Posterior vena cava (tissue), 2 donors: ENCODE measurements at regions of chr7 and their contacts with region 1.

Region 1: DNA sequence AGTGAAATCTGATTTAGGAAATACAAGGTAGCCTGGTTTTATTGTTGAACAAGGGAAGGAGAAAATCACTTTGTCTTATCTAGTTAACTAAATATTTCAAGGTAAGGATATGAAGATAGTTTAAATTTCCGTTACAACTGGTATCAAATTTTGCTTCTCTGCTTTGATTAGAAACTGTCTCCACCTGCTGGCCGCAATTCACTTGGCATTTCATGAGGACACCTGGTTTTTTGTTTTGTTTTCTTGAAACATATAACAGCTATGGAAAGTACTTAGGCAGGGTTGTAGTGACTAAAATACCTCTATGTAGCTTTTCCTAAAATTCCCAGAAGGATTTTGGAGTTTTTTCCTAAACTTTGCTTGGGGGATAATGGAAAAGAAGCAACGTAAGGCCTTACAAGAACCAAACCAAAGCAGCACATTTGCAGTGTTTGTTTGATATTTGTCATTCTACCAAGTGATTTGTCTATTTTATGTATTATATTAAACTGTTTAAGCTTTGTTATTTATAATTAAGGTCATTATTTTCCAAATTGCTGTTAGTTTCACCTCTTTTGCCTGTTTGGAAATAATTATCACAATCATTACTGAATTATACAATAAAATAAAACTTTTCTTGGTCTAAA is 73.6 kb downstream of the AHCYL2 start:
- DNase-seq: no peak

Region 2: DNA sequence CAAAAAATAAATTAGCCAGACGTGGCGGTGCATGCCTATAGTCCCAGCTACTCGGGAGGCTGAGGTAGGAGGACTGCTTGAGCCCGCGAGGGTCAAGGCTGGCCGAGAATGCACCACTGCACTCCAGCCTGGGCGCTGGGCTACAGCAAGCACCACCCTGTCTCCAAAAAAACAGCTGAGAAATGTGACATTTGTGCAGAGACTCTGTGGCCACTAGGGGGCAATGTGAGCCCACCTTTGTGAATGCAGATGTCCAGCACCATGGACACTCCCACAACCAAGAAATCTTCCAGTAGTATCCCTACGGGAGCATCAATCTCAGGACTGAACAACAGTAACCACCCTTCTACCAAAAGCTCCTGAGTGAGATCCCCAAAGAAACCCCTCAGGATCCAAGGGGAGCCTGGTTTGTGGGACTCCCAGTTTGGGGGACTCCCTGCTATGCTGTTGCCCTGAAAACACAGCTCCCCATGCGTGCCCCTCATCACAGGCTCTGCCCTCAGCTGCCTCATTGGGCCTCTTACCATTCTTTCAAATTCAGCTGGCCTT is 79.8 kb before region 1 on chr7:
- intact Hi-C with region 1: loop called in 1 of 2 experiments (anchors 5 kb)
- DNase-seq: peak; percentile 92